Activated CD4-positive, alpha-beta T cell treated with anti-CD3 and anti-CD28 coated beads, Interleukin-2, amount 10 ng/mL, durations not matched to agents 24 days and 14 days (primary cell): ENCODE measurements at regions of chr9 and their contacts with region 1.

Region 1: DNA sequence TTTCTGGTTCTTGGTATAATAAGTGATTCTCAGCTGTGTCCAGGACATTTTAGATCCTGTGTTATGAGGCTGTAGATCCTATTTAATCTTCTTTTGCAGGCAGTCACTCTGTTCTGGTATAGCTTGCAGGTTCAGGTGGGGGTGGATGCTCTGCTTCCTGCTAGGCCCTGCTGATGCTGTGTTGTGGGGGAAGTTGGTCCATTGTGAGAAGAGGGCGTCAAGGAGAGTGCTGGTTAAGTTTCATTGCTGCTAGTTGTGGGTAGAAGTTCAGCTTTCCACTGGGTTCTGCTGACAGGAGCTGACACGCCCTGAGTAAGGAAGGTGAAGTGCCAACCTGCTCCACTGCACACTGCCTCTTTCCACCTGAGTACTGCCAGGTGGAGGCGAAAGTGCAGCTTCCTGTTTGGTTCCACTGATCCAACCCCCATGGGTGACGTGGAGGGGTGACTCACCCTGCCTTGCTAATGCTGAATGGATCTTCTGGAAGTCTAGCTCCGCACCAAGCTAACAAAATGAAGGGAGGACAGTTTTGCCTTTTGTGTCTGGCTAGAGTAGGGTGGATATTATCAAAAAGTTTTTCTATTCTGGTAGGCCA is 16.3 kb downstream of the NMRK1 start:
- DNase-seq: peak; percentile 79
- H3K4me3 Mint-ChIP-seq: no peak overlapping the region
- H3K27ac Mint-ChIP-seq: peak overlapping the region; percentile 12
- H3K4me1 Mint-ChIP-seq: peaks cover 20% of the 10 kb centered on the region
- H3K27me3 Mint-ChIP-seq: no peaks in the 10 kb centered on the region

Region 2: GRCh38 chr9:75001719-75002422 is 69.8 kb before region 1 on chr9:
- intact Hi-C with region 1: loop called (anchors 2 kb)
- DNase-seq: peak; percentile 77
- H3K4me3 Mint-ChIP-seq: no peak overlapping the region
- H3K27ac Mint-ChIP-seq: no peak overlapping the region
- H3K4me1 Mint-ChIP-seq: peaks cover 4% of the 10 kb centered on the region
- H3K27me3 Mint-ChIP-seq: no peaks in the 10 kb centered on the region

Region 3: DNA sequence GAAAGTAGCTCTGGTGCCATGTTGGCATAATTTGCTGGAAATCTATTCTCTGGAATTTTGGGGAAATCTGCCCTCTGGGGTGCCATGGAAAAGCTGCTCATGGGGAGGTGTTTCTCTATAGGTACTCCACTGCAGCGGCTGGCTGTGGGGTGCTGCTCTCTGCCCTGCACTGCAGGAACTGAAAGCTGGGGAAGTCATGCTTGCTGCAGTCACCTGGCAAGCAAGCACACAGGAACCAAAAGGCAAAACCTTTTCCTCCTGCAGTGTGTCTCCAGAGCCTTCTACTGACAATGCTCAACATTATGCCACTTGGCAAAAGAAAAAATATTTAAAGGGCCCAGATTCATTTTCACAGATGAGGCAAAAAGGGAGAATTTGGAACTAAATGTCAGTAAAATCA is 17.8 kb before region 1 on chr9:
- intact Hi-C with region 1: no loop called
- DNase-seq: no peak
- H3K4me3 Mint-ChIP-seq: no peak overlapping the region
- H3K27ac Mint-ChIP-seq: no peak overlapping the region
- H3K4me1 Mint-ChIP-seq: no peaks in the 10 kb centered on the region
- H3K27me3 Mint-ChIP-seq: no peaks in the 10 kb centered on the region

Region 4: DNA sequence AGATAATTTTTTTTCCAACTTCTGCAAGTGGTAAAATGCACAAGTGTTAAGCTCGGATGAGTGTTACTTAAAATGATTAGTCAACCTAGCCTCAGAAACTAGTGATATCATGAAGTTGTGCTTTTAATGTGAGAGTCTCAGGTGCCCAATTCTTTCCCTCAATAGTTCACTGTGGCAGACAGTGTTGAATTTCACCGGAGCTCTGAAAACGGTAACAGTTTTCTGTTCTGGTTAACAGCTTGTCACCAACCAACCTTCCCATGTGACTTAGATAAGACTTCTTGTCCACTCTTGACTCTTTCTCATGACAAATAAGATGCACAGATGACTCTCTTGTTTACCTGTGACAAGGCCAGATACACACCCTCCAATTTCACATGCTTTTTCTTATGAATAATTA is 142.1 kb after region 1 on chr9:
- intact Hi-C with region 1: no loop called
- DNase-seq: no peak
- H3K4me3 Mint-ChIP-seq: no peak overlapping the region
- H3K27ac Mint-ChIP-seq: no peak overlapping the region
- H3K4me1 Mint-ChIP-seq: no peaks in the 10 kb centered on the region
- H3K27me3 Mint-ChIP-seq: peaks cover 7% of the 10 kb centered on the region